H1 (cell line): ENCODE measurements at regions of chr14 and their contacts with region 1.

Region 1: DNA sequence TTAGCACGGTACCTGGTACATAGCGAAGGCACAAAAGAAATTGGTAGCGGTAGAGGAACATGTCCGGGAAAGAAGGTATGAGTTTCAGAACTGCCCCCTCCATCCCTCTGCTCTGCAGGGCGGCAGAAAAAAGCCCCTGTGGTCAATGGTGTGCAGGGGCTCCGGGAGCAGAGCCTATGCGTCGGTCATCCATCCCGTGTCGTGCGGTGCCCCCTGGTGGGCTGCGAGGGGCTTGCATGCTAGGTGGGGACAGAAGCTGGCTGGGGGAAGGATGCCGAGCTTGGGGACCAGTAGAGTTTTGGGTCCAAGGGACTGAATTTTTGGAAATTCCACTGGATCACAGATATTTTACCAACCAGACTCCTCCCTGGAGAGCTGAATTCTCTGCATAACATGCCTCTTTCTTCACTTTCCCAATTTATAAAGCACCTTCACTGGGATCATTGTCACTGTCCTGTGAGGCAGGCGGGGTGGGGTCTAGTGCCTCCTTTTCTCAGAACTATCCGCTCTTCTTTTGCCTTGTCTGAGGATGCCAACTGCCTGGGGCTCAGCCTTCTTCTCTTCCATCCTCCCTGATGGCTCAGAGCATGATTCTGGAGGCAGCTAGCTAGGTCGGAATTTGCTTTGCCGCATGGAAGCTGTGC is 148.7 kb downstream of the SMOC1 start:
- DNase-seq: peak; percentile 33 to 99
- H3K4me3 ChIP-seq: no peak overlapping the region
- H3K27ac ChIP-seq: no peak overlapping the region
- H3K4me1 ChIP-seq: peaks cover 2 to 9% (median 6%) of the 10 kb centered on the region in 4 experiments
- H3K27me3 ChIP-seq: no peaks in the 10 kb centered on the region; a peak in 1 of 7 replicates
- CTCF ChIP-seq: peak; percentile 95 to 98 (median 98)
- EP300 ChIP-seq: no peak
- POLR2A ChIP-seq: no peak
- RAD21 ChIP-seq: peak; percentile 99 to 100

Region 2: DNA sequence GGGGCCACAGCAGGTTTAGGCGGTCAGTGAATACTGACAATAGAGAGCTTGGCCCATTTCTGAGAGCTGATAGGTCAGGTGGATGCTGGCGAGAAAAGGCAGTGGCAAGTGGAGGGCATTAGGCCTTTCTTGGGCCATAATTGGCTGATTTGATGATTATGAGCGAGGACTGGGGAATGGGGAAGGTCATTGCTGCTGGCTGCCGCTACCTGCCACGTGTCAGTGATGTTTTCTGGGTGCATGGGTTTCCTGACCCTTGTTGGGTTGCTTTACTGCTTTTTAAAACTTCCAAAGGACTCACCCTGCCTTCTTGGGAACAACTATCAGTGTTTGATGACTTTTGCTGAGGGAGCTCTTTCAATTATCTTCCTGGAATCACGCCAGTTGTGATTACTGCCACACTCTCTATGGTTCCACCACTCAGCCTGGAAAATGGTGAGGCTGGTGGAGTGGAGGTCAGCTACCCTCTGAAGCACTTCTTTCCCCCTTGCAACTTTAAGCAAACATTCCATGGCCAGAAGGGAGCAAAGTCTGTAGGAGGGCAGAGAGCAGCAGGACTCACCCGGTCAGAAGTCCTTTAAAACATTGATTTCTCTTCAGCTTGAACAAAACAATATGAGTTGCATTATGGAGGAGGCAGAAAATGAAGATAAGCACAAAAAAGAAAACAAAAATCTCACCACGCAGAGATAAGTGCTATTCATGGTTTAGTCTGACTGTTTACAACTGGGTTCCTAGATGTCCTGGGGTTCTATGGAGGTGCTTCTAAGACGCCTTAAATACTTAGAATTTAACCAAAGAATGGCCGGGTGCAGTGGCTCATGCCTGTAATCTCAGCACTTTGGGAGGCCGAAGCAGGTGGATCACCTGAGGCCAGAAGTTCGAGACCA is 218.7 kb before region 1 on chr14:
- CTCF ChIA-PET with region 1: interaction called, 132 read pairs
- POLR2A ChIA-PET with region 1: interaction called, 3 read pairs
- DNase-seq: no peak
- H3K4me3 ChIP-seq: no peak overlapping the region
- H3K27ac ChIP-seq: no peak overlapping the region
- H3K4me1 ChIP-seq: no peaks in the 10 kb centered on the region
- H3K27me3 ChIP-seq: no peaks in the 10 kb centered on the region
- CTCF ChIP-seq: no peak
- EP300 ChIP-seq: no peak
- POLR2A ChIP-seq: no peak
- RAD21 ChIP-seq: no peak

Region 3: GRCh38 chr14:69873877-69874780 is 153.8 kb before region 1 on chr14:
- CTCF ChIA-PET with region 1: interaction called, 79 read pairs
- POLR2A ChIA-PET with region 1: interaction called, 3 read pairs
- DNase-seq: no peak
- H3K4me3 ChIP-seq: no peak overlapping the region
- H3K27ac ChIP-seq: no peak overlapping the region
- H3K4me1 ChIP-seq: peaks cover 0 to 4% (median 0%) of the 10 kb centered on the region in 4 experiments; a peak in 2 of 7 replicates
- H3K27me3 ChIP-seq: peaks cover 0 to 9% (median 4%) of the 10 kb centered on the region in 4 experiments; a peak in 4 of 7 replicates
- CTCF ChIP-seq: no peak
- EP300 ChIP-seq: no peak
- POLR2A ChIP-seq: no peak
- RAD21 ChIP-seq: no peak

Region 4: DNA sequence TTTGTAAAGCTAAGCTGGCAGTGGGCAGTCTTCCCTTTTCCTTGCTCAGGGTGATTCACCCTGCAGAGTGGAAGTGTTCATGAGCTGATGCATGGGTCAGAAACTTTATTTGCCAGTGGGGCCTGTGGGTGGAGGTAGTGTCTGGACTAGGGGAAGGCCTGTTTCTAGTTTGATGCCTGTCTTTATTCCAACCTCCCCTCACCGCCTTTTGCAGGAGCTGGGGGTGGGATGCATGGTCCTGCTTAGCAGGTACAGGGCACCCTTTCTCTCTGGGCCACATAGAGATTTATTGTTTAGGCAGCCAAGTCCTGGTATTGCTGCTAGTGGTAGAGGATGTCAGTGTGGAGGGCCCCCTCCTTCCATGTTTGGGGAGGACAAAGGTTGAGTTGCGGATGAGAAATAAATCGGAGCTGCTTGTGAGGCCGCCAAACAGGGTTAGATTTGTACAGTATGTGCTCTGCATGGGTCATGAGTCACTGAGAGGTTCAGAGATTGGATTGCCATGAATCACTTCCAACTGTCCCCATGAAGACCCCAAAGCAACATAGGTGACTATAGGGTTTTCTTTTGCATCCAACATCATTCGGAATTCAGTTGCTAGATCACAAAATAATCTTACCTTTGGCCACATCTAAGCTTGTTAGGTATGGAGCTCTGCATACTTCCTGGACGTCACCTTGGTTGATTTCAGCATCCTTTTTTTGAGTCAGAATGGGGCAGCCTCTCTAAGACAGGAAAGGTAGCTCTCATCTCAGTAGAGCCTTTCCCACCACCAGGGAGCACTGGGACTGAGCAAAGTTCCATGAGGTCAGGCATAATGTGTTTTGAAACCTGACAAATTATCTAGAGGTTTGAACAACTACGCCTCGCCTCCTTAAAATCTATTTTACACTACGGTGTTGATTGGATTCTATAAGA is 139.9 kb before region 1 on chr14:
- CTCF ChIA-PET with region 1: interaction called, 79 read pairs
- POLR2A ChIA-PET with region 1: no interaction called
- DNase-seq: peak in 1 of 2 experiments; percentile 10
- H3K4me3 ChIP-seq: no peak overlapping the region
- H3K27ac ChIP-seq: no peak overlapping the region
- H3K4me1 ChIP-seq: 0 out of 7 replicates have a peak, but pooled peaks cover 0 to 2% (median 0%) of the 10 kb centered on the region in 4 experiments
- H3K27me3 ChIP-seq: no peaks in the 10 kb centered on the region
- CTCF ChIP-seq: no peak
- EP300 ChIP-seq: no peak
- POLR2A ChIP-seq: no peak
- RAD21 ChIP-seq: no peak

Region 5: DNA sequence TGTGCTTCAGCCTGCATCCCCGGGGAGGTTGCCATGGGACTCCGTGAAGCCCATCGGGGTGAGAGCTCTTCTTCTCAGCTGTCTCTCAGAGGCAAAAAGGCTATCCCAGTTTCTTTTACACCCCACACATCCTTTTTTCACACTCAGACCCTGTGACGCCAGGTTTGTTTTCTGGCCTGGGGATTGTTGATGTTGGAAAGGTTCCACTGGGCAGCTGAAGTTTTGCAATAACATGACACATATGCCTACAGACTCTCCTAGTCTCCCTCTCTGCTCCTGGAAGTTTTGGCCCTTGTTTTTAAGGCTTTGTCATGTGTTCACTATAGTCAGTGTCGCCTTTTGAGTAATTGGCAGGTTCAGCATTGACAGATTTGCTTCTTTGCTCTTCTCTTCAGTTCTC is 30.1 kb before region 1 on chr14:
- CTCF ChIA-PET with region 1: interaction called, 15 read pairs
- POLR2A ChIA-PET with region 1: no interaction called
- DNase-seq: no peak
- H3K4me3 ChIP-seq: no peak overlapping the region
- H3K27ac ChIP-seq: no peak overlapping the region
- H3K4me1 ChIP-seq: no peaks in the 10 kb centered on the region
- H3K27me3 ChIP-seq: no peaks in the 10 kb centered on the region
- CTCF ChIP-seq: no peak
- EP300 ChIP-seq: no peak
- POLR2A ChIP-seq: no peak
- RAD21 ChIP-seq: no peak

Region 6: GRCh38 chr14:70045844-70046535 is 18.1 kb after region 1 on chr14:
- CTCF ChIA-PET with region 1: interaction called, 22 read pairs
- POLR2A ChIA-PET with region 1: no interaction called
- DNase-seq: peak; percentile 63 to 86
- H3K4me3 ChIP-seq: no peak overlapping the region
- H3K27ac ChIP-seq: no peak overlapping the region
- H3K4me1 ChIP-seq: no peaks in the 10 kb centered on the region; a peak in 2 of 7 replicates
- H3K27me3 ChIP-seq: peaks cover 0 to 2% (median under 1%) of the 10 kb centered on the region in 4 experiments; a peak in 2 of 7 replicates
- CTCF ChIP-seq: peak; percentile 93 to 95 (median 93)
- EP300 ChIP-seq: no peak
- POLR2A ChIP-seq: no peak
- RAD21 ChIP-seq: peak; percentile 95 to 97

Region 7: GRCh38 chr14:70139384-70139783 is 111.5 kb after region 1 on chr14:
- CTCF ChIA-PET with region 1: no interaction called
- POLR2A ChIA-PET with region 1: no interaction called
- DNase-seq: no peak
- H3K4me3 ChIP-seq: no peak overlapping the region
- H3K27ac ChIP-seq: no peak overlapping the region
- H3K4me1 ChIP-seq: peaks cover 0 to 2% (median 0%) of the 10 kb centered on the region in 4 experiments; a peak in 1 of 7 replicates
- H3K27me3 ChIP-seq: no peaks in the 10 kb centered on the region
- CTCF ChIP-seq: no peak
- EP300 ChIP-seq: no peak
- POLR2A ChIP-seq: no peak
- RAD21 ChIP-seq: no peak

Region 8: DNA sequence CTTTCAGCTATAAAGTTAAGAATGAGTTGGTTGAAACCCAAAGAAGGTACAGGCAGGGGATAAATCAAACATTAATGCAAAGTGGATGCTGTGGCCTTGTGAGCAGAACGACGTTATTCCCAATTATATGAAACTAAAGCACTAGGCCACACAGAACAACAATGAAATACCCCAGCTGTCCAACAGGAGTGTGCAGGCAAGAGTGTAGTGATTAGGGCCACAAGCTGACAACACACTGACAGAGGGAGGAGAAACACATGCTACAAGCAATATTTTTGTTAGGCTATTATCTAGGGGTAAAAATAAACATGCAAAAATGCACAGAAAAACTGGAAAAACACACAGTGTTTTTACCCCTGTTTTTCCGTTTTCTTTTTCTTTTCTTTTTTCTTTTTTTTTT is 766.4 kb after region 1 on chr14:
- CTCF ChIA-PET with region 1: no interaction called
- POLR2A ChIA-PET with region 1: no interaction called
- DNase-seq: no peak
- H3K4me3 ChIP-seq: no peak overlapping the region
- H3K27ac ChIP-seq: no peak overlapping the region
- H3K4me1 ChIP-seq: no peaks in the 10 kb centered on the region
- H3K27me3 ChIP-seq: no peaks in the 10 kb centered on the region
- CTCF ChIP-seq: no peak
- EP300 ChIP-seq: no peak
- POLR2A ChIP-seq: no peak
- RAD21 ChIP-seq: no peak